Caco-2 (cell line): ENCODE measurements at regions of chr1 and their contacts with region 1.

Region 1: GRCh38 chr1:47478090-47478489 is 40.2 kb downstream of the FOXD2 start:
- DNase-seq: peak; percentile 91 to 93
- H3K4me3 ChIP-seq: peak overlapping the region; percentile 13; the same call in 1 of the 2 replicates
- H3K4me3 Mint-ChIP-seq: peak overlapping the region; percentile 67
- H3K27ac Mint-ChIP-seq: peak overlapping the region; percentile 94
- H3K4me1 ChIP-seq: peaks cover 50% of the 10 kb centered on the region
- H3K4me1 Mint-ChIP-seq: peaks cover 47% of the 10 kb centered on the region
- H3K27me3 ChIP-seq: no peaks in the 10 kb centered on the region
- H3K27me3 Mint-ChIP-seq: no peaks in the 10 kb centered on the region
- CTCF ChIP-seq: no peak

Region 2: GRCh38 chr1:46691997-46692790 is 785.9 kb before region 1 on chr1:
- CTCF ChIA-PET with region 1: no interaction called
- POLR2A ChIA-PET with region 1: interaction called, 11 read pairs
- intact Hi-C with region 1: no loop called
- DNase-seq: no peak
- H3K4me3 ChIP-seq: no peak overlapping the region
- H3K4me3 Mint-ChIP-seq: no peak overlapping the region
- H3K27ac Mint-ChIP-seq: no peak overlapping the region
- H3K4me1 ChIP-seq: no peaks in the 10 kb centered on the region
- H3K4me1 Mint-ChIP-seq: peaks cover 6% of the 10 kb centered on the region
- H3K27me3 ChIP-seq: no peaks in the 10 kb centered on the region
- H3K27me3 Mint-ChIP-seq: no peaks in the 10 kb centered on the region
- CTCF ChIP-seq: no peak

Region 3: GRCh38 chr1:47502746-47503370 is 24.8 kb after region 1 on chr1:
- CTCF ChIA-PET with region 1: interaction called, 10 read pairs
- POLR2A ChIA-PET with region 1: interaction called, 17 read pairs
- intact Hi-C with region 1: loop called (anchors 1 kb)
- DNase-seq: no peak
- H3K4me3 ChIP-seq: no peak overlapping the region
- H3K4me3 Mint-ChIP-seq: no peak overlapping the region
- H3K27ac Mint-ChIP-seq: no peak overlapping the region
- H3K4me1 ChIP-seq: peaks cover 7% of the 10 kb centered on the region; the same call in 1 of the 2 replicates
- H3K4me1 Mint-ChIP-seq: peaks cover 12% of the 10 kb centered on the region
- H3K27me3 ChIP-seq: no peaks in the 10 kb centered on the region
- H3K27me3 Mint-ChIP-seq: no peaks in the 10 kb centered on the region
- CTCF ChIP-seq: no peak

Region 4: DNA sequence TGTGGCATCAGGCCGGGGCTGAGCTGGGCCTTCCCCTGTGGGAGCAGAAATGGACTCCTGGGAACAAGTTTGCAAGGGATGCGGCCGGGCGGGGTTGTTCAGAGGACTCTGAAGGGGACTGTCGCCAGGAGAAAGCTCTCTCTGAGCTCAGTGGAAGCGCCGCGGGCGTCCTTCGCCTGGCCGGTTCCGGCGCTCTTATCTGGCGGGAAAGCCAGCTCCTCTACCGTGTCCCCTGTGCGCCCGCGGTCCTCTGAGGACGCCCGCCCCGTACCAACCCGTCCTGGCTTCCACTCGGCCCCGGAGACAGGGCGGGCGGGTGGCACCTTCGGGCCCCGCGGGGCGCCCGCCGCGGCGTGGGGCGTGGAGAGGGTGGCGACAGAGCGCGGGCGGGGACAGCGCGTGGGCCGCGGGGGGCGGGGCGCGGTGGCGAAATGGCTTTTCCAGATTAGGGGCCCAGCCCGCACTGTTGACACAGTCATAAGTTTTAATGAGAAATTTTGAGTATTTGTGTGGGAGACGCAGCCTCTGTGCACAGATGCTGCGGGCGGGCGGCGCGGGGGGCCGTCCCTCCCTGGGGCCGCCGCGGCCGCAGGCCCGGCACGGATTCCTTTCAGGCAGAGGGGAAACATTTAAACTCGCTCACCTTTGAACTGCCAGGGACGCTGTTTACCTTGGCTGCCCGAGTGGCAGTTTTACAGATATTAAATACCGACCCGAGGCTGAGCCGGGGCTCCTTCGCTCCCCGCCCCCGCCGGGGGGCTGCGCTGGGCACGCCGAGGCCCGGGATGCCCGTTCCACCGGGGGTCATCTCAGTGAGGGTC is 30.0 kb after region 1 on chr1:
- CTCF ChIA-PET with region 1: interaction called, 10 read pairs
- POLR2A ChIA-PET with region 1: interaction called, 17 read pairs
- intact Hi-C with region 1: loop called (anchors 1 kb)
- DNase-seq: peak; percentile 71 to 73
- H3K4me3 ChIP-seq: peak overlapping the region; percentile 39
- H3K4me3 Mint-ChIP-seq: peak overlapping the region; percentile 71
- H3K27ac Mint-ChIP-seq: peak overlapping the region; percentile 39
- H3K4me1 ChIP-seq: peaks cover 15% of the 10 kb centered on the region; the same call in 1 of the 2 replicates
- H3K4me1 Mint-ChIP-seq: peaks cover 12% of the 10 kb centered on the region
- H3K27me3 ChIP-seq: no peaks in the 10 kb centered on the region
- H3K27me3 Mint-ChIP-seq: no peaks in the 10 kb centered on the region
- CTCF ChIP-seq: no peak

Region 5: DNA sequence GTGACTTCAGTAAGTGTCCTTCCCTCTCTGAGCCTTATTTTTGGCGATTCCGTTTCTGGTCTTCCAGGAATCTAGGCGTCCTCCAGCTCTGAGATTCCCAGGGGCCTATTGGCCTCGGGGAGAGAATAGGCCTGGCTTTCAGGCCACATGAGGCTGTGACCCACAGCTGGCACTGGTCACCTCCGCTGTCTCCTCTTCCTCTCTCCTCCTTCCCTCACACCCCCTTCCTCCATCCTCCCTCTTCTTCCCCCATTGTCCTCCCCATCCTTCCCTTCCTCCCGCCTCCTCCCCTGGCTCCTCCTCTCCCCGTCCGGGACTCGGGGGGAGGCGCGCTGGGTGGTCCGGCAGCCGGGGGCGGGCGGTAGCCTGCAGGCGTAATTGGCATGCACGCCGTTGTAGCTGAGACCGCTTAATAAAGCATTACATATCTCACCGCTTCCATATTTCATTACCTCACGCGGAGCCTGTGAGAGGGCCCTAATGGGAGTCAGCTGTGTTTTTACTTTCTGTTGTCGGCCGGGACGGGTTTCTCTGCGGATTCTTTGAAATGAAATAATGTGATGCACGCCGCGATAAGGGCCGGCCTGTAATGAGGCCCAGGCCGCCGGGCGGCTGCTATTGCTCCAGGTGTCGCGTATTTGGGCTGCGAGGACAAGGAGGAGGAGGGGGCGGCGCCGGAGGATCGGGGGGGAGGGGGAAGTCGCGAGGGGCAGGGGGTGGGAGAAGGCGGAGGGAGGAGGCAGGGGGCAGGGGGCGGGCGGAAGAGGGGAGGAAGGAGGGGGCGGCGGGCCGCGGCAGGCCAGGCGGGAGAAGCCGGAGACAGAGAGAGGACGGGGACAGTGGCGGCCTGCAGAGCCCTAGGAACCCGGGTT is 55.1 kb after region 1 on chr1:
- CTCF ChIA-PET with region 1: no interaction called
- POLR2A ChIA-PET with region 1: no interaction called
- intact Hi-C with region 1: no loop called
- DNase-seq: peak in 1 of 2 experiments; percentile 45
- H3K4me3 ChIP-seq: no peak overlapping the region
- H3K4me3 Mint-ChIP-seq: peak overlapping the region; percentile 24
- H3K27ac Mint-ChIP-seq: no peak overlapping the region
- H3K4me1 ChIP-seq: peaks cover 10% of the 10 kb centered on the region; the same call in 1 of the 2 replicates
- H3K4me1 Mint-ChIP-seq: no peaks in the 10 kb centered on the region
- H3K27me3 ChIP-seq: no peaks in the 10 kb centered on the region
- H3K27me3 Mint-ChIP-seq: no peaks in the 10 kb centered on the region
- CTCF ChIP-seq: no peak